ENCODE measurements at regions of chr12 and their contacts with region 1.

Region 1: DNA sequence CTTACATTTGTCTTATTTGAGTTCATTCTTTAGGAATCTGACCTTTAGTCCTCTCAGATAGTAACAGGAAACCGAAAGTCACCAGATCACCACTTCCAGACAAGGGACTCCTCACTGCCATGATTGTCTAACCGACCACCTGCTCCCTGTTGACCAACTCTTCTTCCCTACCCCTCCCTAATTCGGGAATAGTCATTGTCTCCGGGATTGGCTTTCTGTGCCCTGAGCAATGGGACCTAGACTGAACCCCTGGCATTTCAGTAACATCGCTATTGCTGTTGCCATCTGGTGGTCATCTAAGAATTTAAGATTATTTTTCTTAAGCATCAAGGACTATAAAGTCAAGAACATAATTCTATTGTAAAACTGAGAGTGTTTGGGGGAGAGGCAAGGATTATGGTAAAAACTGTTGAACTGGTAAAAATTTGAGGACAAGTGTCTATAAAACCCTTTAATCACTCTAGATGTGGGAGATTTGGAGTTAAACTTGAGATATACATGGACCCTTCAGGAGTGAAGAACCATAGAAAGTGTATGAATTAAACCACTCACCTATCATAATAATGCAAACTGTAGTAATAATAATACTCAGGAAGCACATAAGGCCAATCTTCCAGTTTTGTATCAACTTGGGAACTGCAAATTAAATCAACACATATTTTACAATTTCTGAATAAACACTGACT is 6.3 kb downstream of the CLEC2A start:
- DNase-seq: peak in 1 of 2 experiments; percentile 27
- H3K4me3 ChIP-seq: no peak overlapping the region
- H3K4me3 Mint-ChIP-seq: no peak overlapping the region
- H3K27ac Mint-ChIP-seq: no peak overlapping the region
- H3K4me1 ChIP-seq: no peaks in the 10 kb centered on the region
- H3K4me1 Mint-ChIP-seq: no peaks in the 10 kb centered on the region
- H3K27me3 ChIP-seq: no peaks in the 10 kb centered on the region
- H3K27me3 Mint-ChIP-seq: peaks cover 11% of the 10 kb centered on the region
- CTCF ChIP-seq: peak; percentile 42 to 55

Region 2: DNA sequence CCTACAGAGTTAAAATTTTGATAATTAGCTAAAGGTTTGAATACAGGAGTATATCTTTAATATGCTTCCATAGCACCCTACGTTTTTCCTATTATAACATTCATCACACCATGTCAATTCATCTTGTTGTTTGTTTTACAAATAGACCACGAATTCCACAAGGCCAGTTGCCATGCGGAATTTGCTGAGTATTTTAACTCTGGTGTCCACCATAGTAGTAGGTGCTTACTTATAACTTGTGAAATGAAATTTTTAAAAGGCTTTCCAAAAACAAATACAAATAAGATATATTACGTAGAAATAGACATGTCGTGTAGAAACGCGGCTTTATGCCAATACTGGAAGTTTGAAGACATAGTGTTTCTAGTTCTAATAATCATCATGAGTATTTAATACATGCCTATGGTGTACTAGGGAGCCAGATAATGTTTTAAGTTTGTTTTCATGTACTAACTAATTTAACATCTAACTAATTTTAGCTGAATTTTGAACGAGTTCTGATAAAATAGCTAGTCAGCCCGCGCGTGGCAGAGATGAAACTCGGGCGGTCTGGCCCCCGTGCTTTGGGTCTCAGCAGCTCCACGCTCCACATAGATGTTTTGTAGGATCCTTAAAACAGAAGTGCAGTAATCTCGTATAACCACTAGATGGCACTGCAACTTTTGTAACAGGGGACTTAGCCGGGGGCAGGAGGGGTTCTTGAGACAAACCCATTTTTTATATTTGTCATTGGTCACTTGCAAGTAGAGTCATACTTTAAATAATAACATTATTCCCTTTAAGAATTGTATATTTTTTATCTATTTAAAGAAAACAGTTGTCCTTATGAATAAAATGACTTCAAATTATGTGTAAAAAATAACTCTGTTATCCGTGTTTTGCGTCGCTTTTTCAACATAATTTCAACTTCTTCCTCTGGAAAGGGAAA is 175.3 kb before region 1 on chr12:
- CTCF ChIA-PET with region 1: interaction called, 3 read pairs
- POLR2A ChIA-PET with region 1: no interaction called
- intact Hi-C with region 1: loop called (anchors 1 kb)
- DNase-seq: peak in 1 of 2 experiments; percentile 72
- H3K4me3 ChIP-seq: no peak overlapping the region
- H3K4me3 Mint-ChIP-seq: no peak overlapping the region
- H3K27ac Mint-ChIP-seq: no peak overlapping the region
- H3K4me1 ChIP-seq: no peaks in the 10 kb centered on the region
- H3K4me1 Mint-ChIP-seq: peaks cover 6% of the 10 kb centered on the region
- H3K27me3 ChIP-seq: no peaks in the 10 kb centered on the region
- H3K27me3 Mint-ChIP-seq: peaks cover 12% of the 10 kb centered on the region
- CTCF ChIP-seq: peak; percentile 91 to 96

Region 3: DNA sequence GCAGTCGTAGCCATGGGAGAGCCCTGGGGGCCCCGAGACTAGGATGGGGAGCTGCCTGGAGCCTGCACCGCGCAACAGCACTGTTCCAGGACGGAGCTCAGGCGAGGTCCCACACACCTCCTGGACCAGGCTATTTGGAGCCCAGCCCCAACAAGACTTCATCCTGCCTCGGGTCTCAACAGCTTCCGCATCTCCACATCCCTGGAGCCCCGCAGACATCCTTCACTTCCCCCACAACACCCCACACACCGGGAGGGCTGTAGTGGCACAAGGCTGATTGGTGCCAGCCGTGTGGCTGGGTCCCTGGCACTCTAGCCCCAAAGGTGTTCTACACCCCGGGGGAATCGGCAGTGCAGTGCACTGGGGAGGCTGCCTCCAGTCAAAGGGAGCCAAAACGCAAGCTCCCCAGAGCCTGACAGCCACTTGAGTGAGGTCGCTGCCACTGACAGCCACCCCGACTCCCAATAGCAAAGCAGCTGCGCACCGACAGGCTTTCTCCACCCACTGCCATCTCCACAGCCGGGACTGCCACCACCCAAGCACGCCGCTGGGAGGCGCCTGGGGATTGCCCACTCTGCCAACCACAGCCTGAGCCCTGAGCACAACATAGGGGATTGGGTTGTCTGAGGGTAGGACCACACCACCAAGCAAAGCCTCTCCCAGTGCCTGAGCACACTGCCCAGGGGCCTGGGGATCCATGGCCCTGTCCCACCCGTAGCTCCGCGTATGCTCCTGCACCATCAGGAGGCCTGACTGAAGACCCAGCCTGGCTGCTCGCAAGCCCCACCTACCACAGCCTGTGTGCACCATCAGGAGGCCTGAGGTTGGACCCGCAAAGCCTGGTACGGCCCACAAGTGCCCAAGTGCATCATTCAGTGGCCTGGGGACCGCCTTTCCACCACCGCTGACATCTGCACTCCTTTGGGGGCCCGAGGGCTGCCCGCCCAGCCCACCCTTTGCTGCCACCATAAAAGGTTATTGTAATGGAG is 111.7 kb before region 1 on chr12:
- CTCF ChIA-PET with region 1: no interaction called
- POLR2A ChIA-PET with region 1: no interaction called
- intact Hi-C with region 1: loop called (anchors 1 kb)
- DNase-seq: peak; percentile 74 to 85
- H3K4me3 ChIP-seq: no peak overlapping the region
- H3K4me3 Mint-ChIP-seq: no peak overlapping the region
- H3K27ac Mint-ChIP-seq: no peak overlapping the region
- H3K4me1 ChIP-seq: no peaks in the 10 kb centered on the region
- H3K4me1 Mint-ChIP-seq: no peaks in the 10 kb centered on the region
- H3K27me3 ChIP-seq: no peaks in the 10 kb centered on the region
- H3K27me3 Mint-ChIP-seq: peaks cover 25% of the 10 kb centered on the region
- CTCF ChIP-seq: peak; percentile 81 to 92

Measured in Caco-2 (cell line).